ENCODE measurements at regions of chr4 and their contacts with region 1.

Region 1: GRCh38 chr4:31068257-31069075 is 348.3 kb downstream of the PCDH7 start:
- DNase-seq: no peak

Region 2: DNA sequence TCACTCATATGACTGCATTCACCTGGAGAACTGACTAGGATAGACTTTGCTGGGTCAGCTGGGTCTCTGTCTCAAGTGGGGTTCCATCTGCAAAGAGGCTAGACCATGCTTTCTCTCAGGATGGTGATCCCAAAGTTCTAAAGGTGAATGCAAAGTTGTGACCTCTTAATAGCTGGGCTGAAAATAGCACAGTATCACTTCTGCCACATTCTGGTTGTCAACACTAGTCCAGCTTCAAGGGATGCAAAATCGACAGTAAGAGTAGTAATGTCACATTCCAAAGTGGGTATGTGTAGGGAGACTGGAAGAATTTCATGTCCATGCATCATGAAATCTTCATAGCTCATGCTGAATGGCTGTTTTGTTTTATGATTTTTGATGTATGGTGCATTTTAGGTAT is 66.3 kb after region 1 on chr4:
- intact Hi-C with region 1: loop called (anchors 5 kb)
- DNase-seq: no peak